ENCODE measurements at regions of chr10 and their contacts with region 1.

Region 1: GRCh38 chr10:95693668-95694534 is at the start of gene TCTN3:
- DNase-seq: peak; percentile 96
- ATAC-seq: peak; percentile 99
- H3K4me3 Mint-ChIP-seq: peak within 1 kb of the TSS; percentile 98
- H3K27ac Mint-ChIP-seq: peak within 1 kb of the TSS; percentile 92
- H3K4me1 Mint-ChIP-seq: peaks cover 37% of the 10 kb centered on the region
- H3K27me3 Mint-ChIP-seq: peaks cover 4% of the 10 kb centered on the region
- total RNA-seq, gene TCTN3: 19.4 to 20.0 TPM

Region 2: GRCh38 chr10:94545391-94546048 is 1148.4 kb before region 1 on chr10 and contains the start of gene HELLS:
- CTCF ChIA-PET with region 1: no interaction called
- POLR2A ChIA-PET with region 1: no interaction called
- intact Hi-C with region 1: loop called in 1 of 2 experiments (anchors 2 kb)
- DNase-seq: peak; percentile 88
- ATAC-seq: peak; percentile 86
- H3K4me3 Mint-ChIP-seq: peak within 1 kb of the TSS; percentile 100
- H3K27ac Mint-ChIP-seq: peak within 1 kb of the TSS; percentile 99
- H3K4me1 Mint-ChIP-seq: peaks cover 11% of the 10 kb centered on the region
- H3K27me3 Mint-ChIP-seq: no peaks in the 10 kb centered on the region
- total RNA-seq, gene HELLS: 118 to 154 TPM

Region 3: GRCh38 chr10:95661818-95662217 is 32.1 kb before region 1 on chr10:
- CTCF ChIA-PET with region 1: interaction called, 21 read pairs
- POLR2A ChIA-PET with region 1: no interaction called
- intact Hi-C with region 1: no loop called
- DNase-seq: no peak
- ATAC-seq: no peak
- H3K4me3 Mint-ChIP-seq: no peak overlapping the region
- H3K27ac Mint-ChIP-seq: peak overlapping the region; percentile 17
- H3K4me1 Mint-ChIP-seq: peaks cover 7% of the 10 kb centered on the region
- H3K27me3 Mint-ChIP-seq: no peaks in the 10 kb centered on the region

Region 4: DNA sequence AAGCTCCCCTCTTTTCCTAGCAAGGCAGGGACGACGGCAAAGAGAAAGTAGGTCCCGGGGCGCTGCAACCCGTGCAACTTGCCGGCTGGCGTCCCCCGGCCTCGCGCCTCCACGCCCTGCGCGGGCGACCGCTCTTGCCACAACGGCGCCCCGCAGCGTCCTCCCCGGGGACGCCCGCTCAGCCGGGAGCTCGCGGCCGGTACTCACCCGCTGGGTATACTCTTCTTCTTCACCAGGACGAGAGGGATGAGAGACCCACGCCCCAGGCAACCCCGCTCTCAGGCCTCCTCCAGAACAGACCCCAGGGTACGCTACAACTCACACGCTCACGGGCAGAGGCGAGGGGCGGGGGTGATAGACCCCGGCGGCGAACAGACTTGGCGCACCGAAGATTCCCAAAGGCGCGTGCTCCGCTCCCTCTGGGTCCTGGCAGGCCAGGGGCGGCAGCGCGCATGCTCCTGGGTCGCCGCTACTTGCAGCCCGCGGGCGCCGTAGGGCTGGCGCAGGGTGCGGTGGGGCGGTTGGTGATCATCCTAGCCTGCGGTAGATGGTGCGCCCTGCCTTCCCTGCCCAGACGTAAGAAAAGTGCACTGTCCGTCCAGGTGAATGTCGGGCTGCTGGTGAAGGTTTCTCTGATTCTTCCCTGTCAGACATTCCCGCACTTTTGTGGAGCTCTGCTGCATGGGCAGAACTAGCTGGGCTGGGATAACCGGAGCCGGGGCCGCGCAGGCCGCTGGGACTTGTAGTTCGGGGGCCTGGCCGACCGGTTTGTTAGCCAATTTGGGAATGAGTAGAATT is 213.8 kb after region 1 on chr10 and contains the start of gene CC2D2B:
- CTCF ChIA-PET with region 1: no interaction called
- POLR2A ChIA-PET with region 1: no interaction called
- intact Hi-C with region 1: loop called (anchors 1 to 2 kb)
- DNase-seq: peak; percentile 85
- ATAC-seq: peak; percentile 94
- H3K4me3 Mint-ChIP-seq: peak within 1 kb of the TSS; percentile 88
- H3K27ac Mint-ChIP-seq: peak within 1 kb of the TSS; percentile 96
- H3K4me1 Mint-ChIP-seq: peaks cover 9% of the 10 kb centered on the region
- H3K27me3 Mint-ChIP-seq: peaks cover 2% of the 10 kb centered on the region
- total RNA-seq, gene CC2D2B: 0.23 TPM in 1 of 2 experiments, not detected in the other

Region 5: DNA sequence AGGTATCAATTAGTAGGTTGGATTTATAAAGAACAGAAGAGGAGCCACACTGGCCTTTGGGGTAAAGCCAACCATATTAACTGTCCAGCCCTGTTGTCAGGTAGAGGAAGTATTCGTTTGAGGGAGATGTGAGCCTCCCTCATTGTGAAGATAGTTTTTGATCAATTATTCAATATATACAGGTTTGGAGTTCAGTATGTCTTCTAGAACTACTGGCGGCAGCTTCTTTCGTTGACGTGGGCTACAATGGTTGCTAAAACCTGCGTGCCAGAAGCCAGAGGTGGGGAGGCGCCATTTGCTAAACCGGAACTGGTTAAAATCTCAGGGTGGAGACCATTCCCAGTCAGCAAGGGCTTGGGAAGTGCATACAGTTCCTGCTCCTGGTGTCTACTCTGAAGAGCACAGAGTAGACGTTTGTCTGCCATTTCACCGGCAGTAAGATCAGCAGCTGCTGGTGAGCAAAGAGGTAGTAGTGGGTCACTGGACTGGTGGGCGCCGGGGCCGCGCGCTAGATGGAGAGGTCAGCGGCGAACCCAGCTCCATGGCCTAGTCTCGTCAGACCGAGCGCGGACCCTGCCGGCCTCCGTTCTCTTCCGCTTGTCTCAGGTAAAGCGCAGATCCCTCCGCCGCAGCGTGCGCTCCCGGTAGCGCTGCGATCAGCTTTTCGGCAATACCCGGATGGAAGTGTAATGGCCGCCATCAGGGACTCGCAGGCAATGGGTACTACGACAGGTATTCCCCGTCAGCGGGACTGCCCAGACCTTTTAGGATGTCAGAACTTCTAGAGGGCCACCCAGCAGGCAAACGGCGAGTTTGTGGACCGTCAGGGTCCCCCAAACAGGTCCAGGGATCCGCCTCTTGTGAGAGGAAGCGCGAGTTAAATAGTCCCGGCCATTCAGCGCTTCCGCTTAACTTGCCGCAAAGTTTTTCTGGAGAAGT is 435.8 kb after region 1 on chr10 and contains the start of gene ZNF518A:
- CTCF ChIA-PET with region 1: no interaction called
- POLR2A ChIA-PET with region 1: interaction called, 4 read pairs
- intact Hi-C with region 1: loop called (anchors 1 kb)
- DNase-seq: peak; percentile 93
- ATAC-seq: peak; percentile 88
- H3K4me3 Mint-ChIP-seq: peak within 1 kb of the TSS; percentile 83
- H3K27ac Mint-ChIP-seq: peak within 1 kb of the TSS; percentile 99
- H3K4me1 Mint-ChIP-seq: peaks cover 20% of the 10 kb centered on the region
- H3K27me3 Mint-ChIP-seq: peaks cover 26% of the 10 kb centered on the region
- total RNA-seq, gene ZNF518A: 13.9 to 14.2 TPM

Measured in activated CD4-positive, alpha-beta T cell treated with anti-CD3 and anti-CD28 coated beads for 36 hours (primary cell).